CD4-positive, alpha-beta T cell (primary cell): ENCODE measurements at regions of chr5 and their contacts with region 1.

Region 1: GRCh38 chr5:43140286-43140685 is 19.6 kb downstream of the ZNF131 start:
- DNase-seq: peak in 3 of 14 experiments; percentile 30 to 44 (median 34)
- ATAC-seq: peak; percentile 29
- H3K4me3 ChIP-seq: no peak overlapping the region
- H3K4me3 Mint-ChIP-seq: no peak overlapping the region
- H3K27ac ChIP-seq: peak overlapping the region in 1 of 2 donors; percentile 36
- H3K27ac Mint-ChIP-seq: peak overlapping the region; percentile 61
- H3K4me1 ChIP-seq: peaks cover 11% of the 10 kb centered on the region
- H3K4me1 Mint-ChIP-seq: peaks cover 61% of the 10 kb centered on the region
- H3K27me3 ChIP-seq: no peaks in the 10 kb centered on the region
- H3K27me3 Mint-ChIP-seq: no peaks in the 10 kb centered on the region
- CTCF ChIP-seq: no peak

Region 2: DNA sequence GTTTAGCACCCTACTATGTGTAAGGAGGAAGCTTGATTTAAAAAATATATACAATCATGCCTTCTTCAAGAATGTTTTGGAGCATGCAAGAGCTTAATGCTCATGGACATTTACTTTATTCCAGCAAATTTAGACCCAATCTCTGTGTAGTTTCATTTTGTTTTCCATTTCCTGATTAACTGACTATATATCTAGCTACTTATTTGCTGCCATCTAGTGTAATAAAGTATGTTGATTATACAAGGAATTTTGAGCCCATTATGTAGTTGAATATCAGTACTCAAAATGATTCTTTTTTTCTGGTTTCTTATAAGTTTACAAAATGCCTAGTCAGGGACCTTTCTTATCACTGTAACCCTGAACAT is 483.7 kb before region 1 on chr5:
- CTCF ChIA-PET with region 1: no interaction called
- POLR2A ChIA-PET with region 1: no interaction called
- intact Hi-C with region 1: no loop called
- DNase-seq: no peak
- ATAC-seq: no peak
- H3K4me3 ChIP-seq: no peak overlapping the region
- H3K4me3 Mint-ChIP-seq: no peak overlapping the region
- H3K27ac ChIP-seq: no peak overlapping the region
- H3K27ac Mint-ChIP-seq: no peak overlapping the region
- H3K4me1 ChIP-seq: no peaks in the 10 kb centered on the region
- H3K4me1 Mint-ChIP-seq: peaks cover 4% of the 10 kb centered on the region
- H3K27me3 ChIP-seq: no peaks in the 10 kb centered on the region
- H3K27me3 Mint-ChIP-seq: peaks cover 19% of the 10 kb centered on the region
- CTCF ChIP-seq: no peak

Region 3: GRCh38 chr5:44808435-44809214 is 1668.3 kb after region 1 on chr5 and contains the start of gene MRPS30:
- CTCF ChIA-PET with region 1: no interaction called
- POLR2A ChIA-PET with region 1: no interaction called
- intact Hi-C with region 1: loop called in 1 of 2 experiments (anchors 10 kb)
- DNase-seq: peak; percentile 74 to 97 (median 84)
- ATAC-seq: peak; percentile 94
- H3K4me3 ChIP-seq: peak within 1 kb of the TSS; percentile 85
- H3K4me3 Mint-ChIP-seq: peak within 1 kb of the TSS; percentile 95
- H3K27ac ChIP-seq: peak within 1 kb of the TSS; percentile 80 to 87
- H3K27ac Mint-ChIP-seq: peak within 1 kb of the TSS; percentile 97
- H3K4me1 ChIP-seq: peaks cover 11% of the 10 kb centered on the region
- H3K4me1 Mint-ChIP-seq: peaks cover 35% of the 10 kb centered on the region
- H3K27me3 ChIP-seq: no peaks in the 10 kb centered on the region
- H3K27me3 Mint-ChIP-seq: no peaks in the 10 kb centered on the region
- CTCF ChIP-seq: peak; percentile 50
- total RNA-seq, gene MRPS30: 43.2 to 43.8 TPM